Mammary epithelial cell (primary cell): ENCODE measurements at regions of chr14 and their contacts with region 1.

Region 1: GRCh38 chr14:72665259-72665658 is 228.6 kb downstream of the DPF3 start:
- DNase-seq: peak; percentile 99
- H3K4me3 ChIP-seq: no peak overlapping the region
- H3K27ac ChIP-seq: peak overlapping the region; percentile 92
- H3K4me1 ChIP-seq: peaks cover 27% of the 10 kb centered on the region
- H3K27me3 ChIP-seq: no peaks in the 10 kb centered on the region
- CTCF ChIP-seq: no peak

Region 2: DNA sequence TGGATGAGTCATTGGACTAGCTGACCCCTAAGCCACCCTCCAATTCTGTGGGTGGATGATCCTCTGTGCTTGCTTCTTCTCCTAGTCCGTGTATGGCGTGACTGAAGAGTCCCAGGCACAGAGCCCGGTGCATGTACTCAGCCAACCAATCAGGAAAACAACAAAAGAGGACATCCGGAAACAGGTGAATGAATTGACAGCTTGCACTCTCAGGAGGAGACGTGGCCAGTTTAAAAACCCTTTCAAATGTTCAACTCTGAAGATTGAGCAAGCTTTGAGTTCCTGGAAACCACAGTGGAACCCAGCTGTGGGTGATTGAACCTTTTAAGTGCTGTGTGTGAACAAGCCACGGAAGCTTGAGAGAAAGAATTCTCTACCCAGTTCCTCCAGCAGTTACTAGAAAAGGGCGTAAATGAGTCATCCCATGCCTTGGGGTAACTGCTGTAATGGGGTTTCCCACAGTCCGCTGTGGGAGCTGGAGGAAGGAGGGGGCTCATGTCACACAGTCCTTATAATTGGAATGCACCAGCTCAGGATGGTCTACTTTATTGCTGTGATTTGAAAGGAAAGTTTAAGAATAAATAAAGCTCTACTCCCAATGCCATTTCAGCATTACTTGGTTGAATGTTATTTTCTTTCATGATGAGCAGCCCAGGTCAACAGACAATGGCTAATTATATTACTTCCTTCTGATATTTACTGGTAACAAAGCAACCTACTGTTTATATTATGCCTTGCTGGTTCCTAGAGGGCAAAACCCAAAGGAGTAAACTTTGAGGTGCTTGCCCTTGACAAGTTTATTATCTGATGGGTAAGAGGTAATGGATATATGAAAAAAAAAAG is 188.4 kb before region 1 on chr14:
- CTCF ChIA-PET with region 1: no interaction called
- dilution Hi-C with region 1: no loop called
- in situ Hi-C with region 1: no loop called
- intact Hi-C with region 1: no loop called
- DNase-seq: peak; percentile 86
- H3K4me3 ChIP-seq: no peak overlapping the region
- H3K27ac ChIP-seq: no peak overlapping the region
- H3K4me1 ChIP-seq: peaks cover 14% of the 10 kb centered on the region
- H3K27me3 ChIP-seq: no peaks in the 10 kb centered on the region
- CTCF ChIP-seq: no peak

Region 3: DNA sequence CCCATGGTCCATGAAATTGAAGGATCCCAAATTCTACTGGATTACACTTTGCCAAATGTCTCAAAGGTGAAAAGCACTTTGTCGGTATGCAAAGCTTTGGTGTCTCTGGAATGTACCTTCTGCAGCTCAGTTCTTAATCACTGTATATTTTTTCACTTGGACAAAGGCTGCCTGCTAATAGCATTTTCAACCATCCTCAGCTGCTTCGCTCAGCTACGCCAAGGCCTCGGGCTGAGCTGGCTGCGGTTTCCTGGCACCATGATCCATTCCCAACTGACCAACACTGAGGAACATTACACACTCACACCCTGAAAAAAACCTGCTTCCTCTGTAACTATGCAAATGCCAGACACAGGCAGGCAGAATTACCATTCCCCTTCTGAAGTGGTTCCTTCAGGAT is 106.5 kb before region 1 on chr14:
- CTCF ChIA-PET with region 1: no interaction called
- dilution Hi-C with region 1: no loop called
- in situ Hi-C with region 1: no loop called
- intact Hi-C with region 1: loop called (anchors 2 kb)
- DNase-seq: peak; percentile 88
- H3K4me3 ChIP-seq: no peak overlapping the region
- H3K27ac ChIP-seq: peak overlapping the region; percentile 85
- H3K4me1 ChIP-seq: peaks cover 36% of the 10 kb centered on the region
- H3K27me3 ChIP-seq: no peaks in the 10 kb centered on the region
- CTCF ChIP-seq: no peak

Region 4: DNA sequence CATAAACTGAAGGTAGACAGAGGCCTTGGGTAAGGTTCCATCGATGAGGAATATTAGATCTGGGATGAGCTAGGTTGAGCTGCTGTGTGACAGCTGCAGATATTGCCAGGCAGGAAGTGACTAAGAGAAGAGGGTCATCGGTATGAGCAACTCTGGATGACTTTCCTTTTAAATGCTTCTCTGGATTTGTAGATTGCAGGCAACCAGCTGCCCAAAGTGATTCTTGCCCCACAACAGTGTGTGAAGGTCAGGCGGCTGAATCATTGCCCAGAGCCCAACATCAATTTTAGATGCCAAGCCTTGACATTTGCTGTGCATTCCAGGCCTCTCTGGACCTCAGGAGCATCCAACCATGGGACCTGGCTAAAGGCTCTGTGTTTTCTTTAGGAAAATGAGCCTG is 27.2 kb before region 1 on chr14:
- CTCF ChIA-PET with region 1: no interaction called
- dilution Hi-C with region 1: no loop called
- in situ Hi-C with region 1: no loop called
- intact Hi-C with region 1: loop called (anchors 1 kb)
- DNase-seq: peak; percentile 72
- H3K4me3 ChIP-seq: no peak overlapping the region
- H3K27ac ChIP-seq: peak overlapping the region; percentile 5
- H3K4me1 ChIP-seq: peaks cover 27% of the 10 kb centered on the region
- H3K27me3 ChIP-seq: no peaks in the 10 kb centered on the region
- CTCF ChIP-seq: no peak

Region 5: DNA sequence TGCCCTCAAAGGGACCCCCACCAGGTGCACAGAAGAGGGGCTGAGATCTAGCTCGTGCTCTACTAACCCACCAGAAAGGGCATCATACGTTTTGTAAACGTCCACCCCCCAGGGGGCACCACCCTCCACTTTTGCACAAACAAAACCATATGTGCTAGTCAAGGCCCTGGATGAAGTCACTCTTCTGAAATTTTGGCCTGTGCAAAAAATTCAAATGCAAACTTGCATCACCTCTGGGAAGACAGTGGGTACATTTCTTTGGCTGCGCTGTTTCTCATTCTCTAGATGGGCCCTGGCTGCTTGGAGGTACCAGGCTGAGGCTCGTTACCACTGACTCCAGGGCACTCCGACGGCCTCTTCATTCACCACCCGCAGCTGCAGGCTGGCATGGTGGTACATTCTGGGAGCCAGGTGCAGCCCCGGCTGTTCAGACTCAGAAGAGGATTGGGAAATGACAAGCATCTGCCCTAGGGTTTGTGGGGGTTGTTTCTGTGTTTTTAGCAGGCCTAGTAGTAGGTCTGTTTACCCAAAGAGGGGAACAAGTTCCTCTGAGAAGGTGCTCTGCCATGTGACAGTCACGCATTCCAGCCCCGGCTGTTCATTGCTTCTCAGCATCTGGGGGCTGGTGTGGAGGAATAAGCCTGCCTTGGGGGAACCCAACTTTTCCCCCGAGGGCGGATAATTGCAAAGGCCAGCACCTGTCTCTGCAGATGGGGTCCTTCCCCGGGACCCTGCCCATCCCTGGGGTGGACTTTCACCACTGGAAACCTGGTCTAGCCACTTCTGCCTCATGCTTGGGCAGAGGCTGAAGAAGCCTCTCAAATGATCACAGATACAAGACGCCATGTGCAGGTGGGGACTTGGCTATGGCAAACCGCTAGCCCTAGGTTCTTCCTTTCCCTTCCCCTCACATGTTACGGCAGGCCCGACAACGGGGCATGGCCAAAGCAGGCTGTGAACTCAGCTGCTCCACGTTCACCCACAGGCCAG is 81.0 kb after region 1 on chr14:
- CTCF ChIA-PET with region 1: no interaction called
- dilution Hi-C with region 1: no loop called
- in situ Hi-C with region 1: no loop called
- intact Hi-C with region 1: loop called (anchors 5 kb)
- DNase-seq: peak; percentile 37
- H3K4me3 ChIP-seq: no peak overlapping the region
- H3K27ac ChIP-seq: peak overlapping the region; percentile 44
- H3K4me1 ChIP-seq: peaks cover 20% of the 10 kb centered on the region
- H3K27me3 ChIP-seq: no peaks in the 10 kb centered on the region
- CTCF ChIP-seq: no peak

Region 6: GRCh38 chr14:72904840-72905561 is 239.7 kb after region 1 on chr14:
- CTCF ChIA-PET with region 1: no interaction called
- dilution Hi-C with region 1: no loop called
- in situ Hi-C with region 1: no loop called
- intact Hi-C with region 1: loop called (anchors 2 kb)
- DNase-seq: peak; percentile 66
- H3K4me3 ChIP-seq: no peak overlapping the region
- H3K27ac ChIP-seq: no peak overlapping the region
- H3K4me1 ChIP-seq: peaks cover 27% of the 10 kb centered on the region
- H3K27me3 ChIP-seq: no peaks in the 10 kb centered on the region
- CTCF ChIP-seq: peak; percentile 94 to 97